ENCODE measurements at regions of chr6 and their contacts with region 1.

Region 1: DNA sequence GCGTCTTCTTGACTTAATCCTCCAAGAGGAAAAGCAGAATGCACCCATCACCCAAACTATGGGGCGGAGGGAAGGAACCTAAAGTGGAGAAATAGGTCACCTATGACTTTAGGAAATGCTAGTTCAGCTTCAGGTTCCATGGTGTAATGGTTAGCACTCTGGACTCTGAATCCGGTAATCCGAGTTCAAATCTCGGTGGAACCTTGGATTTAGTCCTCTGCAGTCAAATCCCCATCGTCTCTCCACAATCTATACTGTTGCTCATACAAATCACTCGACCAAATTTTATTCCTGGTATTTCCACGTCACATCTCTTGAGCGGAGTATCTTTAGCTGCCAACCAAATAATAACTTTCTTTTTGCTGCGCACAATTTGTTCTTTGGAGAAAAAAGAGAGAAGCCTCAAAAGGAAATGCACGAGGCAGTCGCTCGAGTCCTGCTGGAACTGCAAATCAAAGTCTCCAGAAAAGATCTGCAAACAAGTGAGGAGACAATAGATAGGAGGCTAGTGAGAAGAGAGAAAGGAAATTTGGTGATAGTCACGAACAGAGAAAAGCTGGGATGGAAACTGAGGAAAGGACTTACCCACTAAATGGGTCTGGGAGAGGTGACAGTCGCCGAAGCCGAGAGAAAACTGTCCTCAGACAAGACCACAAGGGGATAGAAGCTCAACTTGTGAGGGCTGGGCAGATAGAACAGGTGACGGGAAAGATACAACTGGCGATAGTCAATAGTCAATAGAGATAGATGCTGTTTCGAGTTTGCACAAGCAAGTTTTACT is 16.6 kb downstream of the POM121L2 start:
- DNase-seq: peak; percentile 69
- H3K4me3 Mint-ChIP-seq: peak overlapping the region; percentile 89
- H3K27ac Mint-ChIP-seq: peak overlapping the region; percentile 76
- H3K4me1 Mint-ChIP-seq: peaks cover 29% of the 10 kb centered on the region
- H3K27me3 Mint-ChIP-seq: no peaks in the 10 kb centered on the region
- CTCF ChIP-seq: no peak

Region 2: DNA sequence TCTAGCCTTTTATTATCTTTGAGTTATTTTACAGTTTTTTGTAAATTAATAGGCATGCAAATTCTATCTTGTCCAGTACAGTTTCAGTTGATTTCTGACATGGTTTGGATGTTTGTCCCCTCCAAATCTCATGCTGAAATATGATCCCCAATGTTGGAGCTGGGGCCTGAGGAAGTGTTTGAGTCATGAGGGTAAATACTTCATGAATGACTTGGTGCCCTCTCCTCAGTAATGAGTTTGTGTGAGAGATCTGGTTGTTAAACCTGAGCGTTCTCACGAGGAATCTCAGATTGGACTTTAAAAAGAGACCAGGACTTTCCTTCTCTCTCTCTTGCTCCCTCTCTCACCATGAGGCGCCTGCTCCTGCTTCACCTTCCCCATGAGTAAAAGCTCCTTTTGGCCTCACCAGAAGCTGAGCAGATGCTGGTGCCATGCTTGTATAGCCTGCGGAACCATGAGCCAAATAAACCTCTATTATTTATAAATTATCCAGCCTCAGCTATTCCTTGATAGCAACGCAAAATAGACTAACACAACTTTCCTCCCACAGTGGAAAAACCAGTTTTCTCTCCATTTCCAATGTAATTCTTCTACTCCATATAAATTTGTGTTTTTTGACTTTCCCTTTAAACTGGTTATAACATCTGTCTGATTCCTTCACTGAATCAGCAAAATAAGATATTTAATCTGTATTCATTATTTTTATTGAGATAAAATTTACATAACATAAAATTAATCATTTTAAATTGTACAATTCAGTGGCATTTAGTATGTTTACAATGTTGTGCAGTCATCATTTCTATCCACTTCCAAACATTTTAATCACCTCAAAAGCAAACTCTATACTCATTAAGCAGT is 126.7 kb before region 1 on chr6:
- CTCF ChIA-PET with region 1: no interaction called
- intact Hi-C with region 1: loop called (anchors 5 kb)
- DNase-seq: peak; percentile 23
- H3K4me3 Mint-ChIP-seq: no peak overlapping the region
- H3K27ac Mint-ChIP-seq: peak overlapping the region; percentile 77
- H3K4me1 Mint-ChIP-seq: peaks cover 18% of the 10 kb centered on the region
- H3K27me3 Mint-ChIP-seq: no peaks in the 10 kb centered on the region
- CTCF ChIP-seq: no peak

Region 3: GRCh38 chr6:27237089-27237803 is 58.2 kb before region 1 on chr6:
- CTCF ChIA-PET with region 1: no interaction called
- intact Hi-C with region 1: loop called (anchors 5 kb)
- DNase-seq: peak; percentile 69
- H3K4me3 Mint-ChIP-seq: peak overlapping the region; percentile 20
- H3K27ac Mint-ChIP-seq: peak overlapping the region; percentile 50
- H3K4me1 Mint-ChIP-seq: peaks cover 39% of the 10 kb centered on the region
- H3K27me3 Mint-ChIP-seq: peaks cover 2% of the 10 kb centered on the region
- CTCF ChIP-seq: no peak

Region 4: GRCh38 chr6:27251606-27252251 is 43.8 kb before region 1 on chr6:
- CTCF ChIA-PET with region 1: interaction called, 10 read pairs
- intact Hi-C with region 1: no loop called
- DNase-seq: peak; percentile 97
- H3K4me3 Mint-ChIP-seq: peak overlapping the region; percentile 81
- H3K27ac Mint-ChIP-seq: peak overlapping the region; percentile 65
- H3K4me1 Mint-ChIP-seq: peaks cover 14% of the 10 kb centered on the region
- H3K27me3 Mint-ChIP-seq: no peaks in the 10 kb centered on the region
- CTCF ChIP-seq: peak; percentile 48

Region 5: GRCh38 chr6:27332692-27333641 is 37.5 kb after region 1 on chr6:
- CTCF ChIA-PET with region 1: no interaction called
- intact Hi-C with region 1: no loop called
- DNase-seq: peak; percentile 41
- H3K4me3 Mint-ChIP-seq: peak overlapping the region; percentile 80
- H3K27ac Mint-ChIP-seq: peak overlapping the region; percentile 97
- H3K4me1 Mint-ChIP-seq: peaks cover 9% of the 10 kb centered on the region
- H3K27me3 Mint-ChIP-seq: no peaks in the 10 kb centered on the region
- CTCF ChIP-seq: no peak

Region 6: DNA sequence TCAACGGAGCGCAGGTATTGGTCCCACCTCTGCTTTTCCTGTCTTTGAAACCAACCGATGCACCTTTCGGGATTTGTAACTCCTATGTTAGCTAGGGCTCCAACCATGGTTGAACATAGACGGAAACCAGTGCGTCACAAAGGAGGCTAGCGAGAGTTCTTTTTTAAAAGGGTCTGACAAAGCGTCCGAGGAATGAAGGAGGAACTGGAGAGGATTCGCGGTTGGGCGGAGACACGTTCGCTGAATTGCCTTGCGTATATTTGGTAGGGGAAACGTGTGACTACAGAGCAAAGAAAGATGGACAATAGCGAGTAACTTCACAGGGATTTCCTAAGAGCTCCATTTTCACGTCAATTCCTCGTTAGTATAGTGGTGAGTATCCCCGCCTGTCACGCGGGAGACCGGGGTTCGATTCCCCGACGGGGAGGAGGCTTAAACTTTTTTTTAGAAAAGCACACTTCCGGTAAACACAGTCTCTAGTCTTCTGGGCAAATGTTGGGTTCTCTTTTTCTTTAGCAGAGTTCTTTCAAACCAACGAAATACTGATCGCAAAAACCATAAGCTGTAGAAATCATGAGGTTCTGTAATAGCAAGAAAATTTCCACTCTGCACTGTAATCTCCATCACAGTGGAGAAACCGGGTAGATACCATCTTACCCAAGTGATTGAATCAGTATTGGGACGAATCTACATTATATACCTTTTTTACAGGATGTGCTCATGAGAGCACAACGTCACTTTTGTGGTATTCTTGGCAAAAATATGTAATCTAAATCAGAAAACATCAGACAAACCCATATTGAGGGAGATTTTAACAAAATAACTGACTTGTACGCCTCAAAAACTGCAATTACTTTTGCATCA is 184.1 kb after region 1 on chr6:
- CTCF ChIA-PET with region 1: no interaction called
- intact Hi-C with region 1: loop called (anchors 5 kb)
- DNase-seq: peak; percentile 88
- H3K4me3 Mint-ChIP-seq: no peak overlapping the region
- H3K27ac Mint-ChIP-seq: no peak overlapping the region
- H3K4me1 Mint-ChIP-seq: no peaks in the 10 kb centered on the region
- H3K27me3 Mint-ChIP-seq: no peaks in the 10 kb centered on the region
- CTCF ChIP-seq: no peak

Region 7: GRCh38 chr6:27687154-27688013 is 391.9 kb after region 1 on chr6:
- CTCF ChIA-PET with region 1: no interaction called
- intact Hi-C with region 1: loop called (anchors 10 kb)
- DNase-seq: peak; percentile 92
- H3K4me3 Mint-ChIP-seq: peak overlapping the region; percentile 84
- H3K27ac Mint-ChIP-seq: peak overlapping the region; percentile 84
- H3K4me1 Mint-ChIP-seq: peaks cover 14% of the 10 kb centered on the region
- H3K27me3 Mint-ChIP-seq: no peaks in the 10 kb centered on the region
- CTCF ChIP-seq: peak; percentile 87